Panc1 (cell line): ENCODE measurements at regions of chr18 and their contacts with region 1.

Region 1: GRCh38 chr18:66872277-66872676 is 268.4 kb upstream of the CDH19 start:
- DNase-seq: no peak
- ATAC-seq: no peak
- H3K4me3 ChIP-seq: no peak overlapping the region
- H3K27ac ChIP-seq: no peak overlapping the region
- H3K4me1 ChIP-seq: no peaks in the 10 kb centered on the region
- H3K27me3 ChIP-seq: no peaks in the 10 kb centered on the region
- CTCF ChIP-seq: peak; percentile 21; the same call in 1 of the 2 replicates

Region 2: DNA sequence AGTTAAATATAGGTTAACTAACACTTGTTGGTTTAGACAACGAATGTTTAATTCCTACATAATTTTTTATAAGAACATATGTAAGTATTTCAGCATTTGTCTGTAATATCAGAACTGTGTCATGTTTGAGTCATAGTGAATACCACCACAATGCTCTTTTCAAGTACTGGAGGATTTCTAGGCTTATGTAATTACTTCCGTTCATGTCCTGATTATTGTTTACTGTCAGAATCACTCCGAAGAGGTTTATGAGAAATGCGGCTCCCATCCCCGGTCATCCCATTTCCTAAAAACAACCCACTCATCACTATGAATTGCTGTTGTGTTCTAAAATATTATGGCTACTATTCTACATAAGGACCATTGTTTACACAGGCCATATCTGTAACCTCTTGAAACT is 313.5 kb before region 1 on chr18:
- CTCF ChIA-PET with region 1: no interaction called
- POLR2A ChIA-PET with region 1: no interaction called
- in situ Hi-C with region 1: no loop called
- intact Hi-C with region 1: loop called (anchors 5 kb)
- DNase-seq: no peak
- ATAC-seq: no peak
- H3K4me3 ChIP-seq: no peak overlapping the region
- H3K27ac ChIP-seq: no peak overlapping the region
- H3K4me1 ChIP-seq: no peaks in the 10 kb centered on the region
- H3K27me3 ChIP-seq: no peaks in the 10 kb centered on the region
- CTCF ChIP-seq: no peak

Region 3: DNA sequence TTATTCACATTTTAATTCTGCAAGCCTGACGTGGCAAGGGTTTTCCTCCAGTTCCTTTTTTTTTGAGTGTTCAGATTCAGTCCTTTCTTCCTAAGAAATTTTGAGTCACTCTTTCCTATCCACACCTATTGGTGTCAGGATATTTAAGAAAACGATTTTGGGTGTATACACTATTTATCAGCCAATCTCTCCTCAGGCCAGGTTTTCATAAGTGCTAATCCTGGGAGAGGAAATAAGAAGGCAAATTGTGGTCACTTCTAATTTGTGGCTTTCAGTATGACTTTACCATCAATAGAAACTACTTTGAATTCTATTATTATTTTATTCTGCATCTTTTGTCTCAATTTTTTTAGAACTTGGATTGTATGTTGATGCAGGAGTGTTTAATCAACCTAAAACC is 469.9 kb after region 1 on chr18:
- CTCF ChIA-PET with region 1: no interaction called
- POLR2A ChIA-PET with region 1: no interaction called
- in situ Hi-C with region 1: no loop called
- intact Hi-C with region 1: no loop called
- DNase-seq: no peak
- ATAC-seq: no peak
- H3K4me3 ChIP-seq: no peak overlapping the region
- H3K27ac ChIP-seq: no peak overlapping the region
- H3K4me1 ChIP-seq: no peaks in the 10 kb centered on the region
- H3K27me3 ChIP-seq: no peaks in the 10 kb centered on the region
- CTCF ChIP-seq: no peak